Activated CD8-positive, alpha-beta T cell treated with anti-CD3 and anti-CD28 coated beads for 36 hours (primary cell): ENCODE measurements at regions of chr3 and their contacts with region 1.

Region 1: GRCh38 chr3:72665701-72666443 is 182.4 kb downstream of the SHQ1 start:
- DNase-seq: peak; percentile 77
- ATAC-seq: peak; percentile 68
- H3K4me3 Mint-ChIP-seq: no peak overlapping the region
- H3K27ac Mint-ChIP-seq: no peak overlapping the region
- H3K4me1 Mint-ChIP-seq: no peaks in the 10 kb centered on the region
- H3K27me3 Mint-ChIP-seq: no peaks in the 10 kb centered on the region
- CTCF ChIP-seq: peak; percentile 67

Region 2: DNA sequence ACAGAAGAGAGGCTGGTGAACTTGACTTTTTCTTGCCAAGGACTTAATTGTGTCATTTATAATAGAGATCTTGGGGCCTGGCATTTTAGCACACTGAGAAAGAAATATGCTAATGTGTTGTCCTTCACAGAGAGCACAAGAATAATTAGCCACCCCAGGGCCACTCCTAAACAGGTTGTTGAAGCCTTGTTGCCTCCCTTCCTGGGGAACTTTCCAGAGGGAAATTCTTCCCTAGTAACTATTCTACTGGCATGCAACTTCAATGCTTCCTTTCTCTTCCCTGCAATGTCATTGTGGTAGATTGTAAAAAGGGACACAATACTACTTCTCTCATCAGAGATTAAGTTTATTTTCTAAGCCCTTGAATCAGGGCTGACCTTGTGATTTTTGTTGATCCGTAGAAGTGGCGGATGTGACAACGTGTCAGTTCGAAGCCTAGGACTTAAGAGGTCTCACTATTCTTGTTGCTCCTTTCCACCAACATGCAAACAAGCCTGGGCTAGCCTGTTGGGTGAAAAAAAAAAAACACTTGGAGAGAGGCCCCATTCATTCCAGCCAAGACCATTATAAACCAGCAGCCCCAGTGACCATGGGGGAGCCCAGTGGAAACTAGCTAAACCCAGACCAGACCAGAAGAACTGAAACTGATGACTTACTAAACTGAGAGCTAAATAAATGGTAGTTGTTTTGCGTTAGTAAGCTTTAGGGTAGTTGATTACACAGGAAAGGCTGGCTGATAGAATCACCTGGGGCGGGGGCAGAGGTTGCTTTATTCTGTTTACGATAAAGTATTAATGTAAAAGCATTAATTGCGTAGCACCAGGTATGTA is 104.8 kb before region 1 on chr3:
- CTCF ChIA-PET with region 1: no interaction called
- POLR2A ChIA-PET with region 1: no interaction called
- intact Hi-C with region 1: no loop called
- DNase-seq: no peak
- ATAC-seq: no peak
- H3K4me3 Mint-ChIP-seq: no peak overlapping the region
- H3K27ac Mint-ChIP-seq: no peak overlapping the region
- H3K4me1 Mint-ChIP-seq: no peaks in the 10 kb centered on the region
- H3K27me3 Mint-ChIP-seq: peaks cover 1% of the 10 kb centered on the region
- CTCF ChIP-seq: no peak

Region 3: GRCh38 chr3:72652395-72652794 is 13.5 kb before region 1 on chr3:
- CTCF ChIA-PET with region 1: interaction called, 15 read pairs
- POLR2A ChIA-PET with region 1: no interaction called
- intact Hi-C with region 1: no loop called
- DNase-seq: no peak
- ATAC-seq: no peak
- H3K4me3 Mint-ChIP-seq: no peak overlapping the region
- H3K27ac Mint-ChIP-seq: no peak overlapping the region
- H3K4me1 Mint-ChIP-seq: peaks cover under 1% of the 10 kb centered on the region
- H3K27me3 Mint-ChIP-seq: peaks cover 9% of the 10 kb centered on the region
- CTCF ChIP-seq: no peak

Region 4: GRCh38 chr3:72682936-72683452 is 17.1 kb after region 1 on chr3:
- CTCF ChIA-PET with region 1: interaction called, 10 read pairs
- POLR2A ChIA-PET with region 1: no interaction called
- intact Hi-C with region 1: no loop called
- DNase-seq: no peak
- ATAC-seq: no peak
- H3K4me3 Mint-ChIP-seq: no peak overlapping the region
- H3K27ac Mint-ChIP-seq: no peak overlapping the region
- H3K4me1 Mint-ChIP-seq: peaks cover 11% of the 10 kb centered on the region
- H3K27me3 Mint-ChIP-seq: no peaks in the 10 kb centered on the region
- CTCF ChIP-seq: no peak

Region 5: GRCh38 chr3:72722930-72723726 is 57.3 kb after region 1 on chr3:
- CTCF ChIA-PET with region 1: interaction called, 15 read pairs
- POLR2A ChIA-PET with region 1: no interaction called
- intact Hi-C with region 1: no loop called
- DNase-seq: peak; percentile 49
- ATAC-seq: peak; percentile 97
- H3K4me3 Mint-ChIP-seq: peak overlapping the region; percentile 21
- H3K27ac Mint-ChIP-seq: peak overlapping the region; percentile 77
- H3K4me1 Mint-ChIP-seq: peaks cover 16% of the 10 kb centered on the region
- H3K27me3 Mint-ChIP-seq: no peaks in the 10 kb centered on the region
- CTCF ChIP-seq: no peak

Region 6: GRCh38 chr3:72782521-72782920 is 116.6 kb after region 1 on chr3:
- CTCF ChIA-PET with region 1: interaction called, 11 read pairs
- POLR2A ChIA-PET with region 1: no interaction called
- intact Hi-C with region 1: no loop called
- DNase-seq: no peak
- ATAC-seq: no peak
- H3K4me3 Mint-ChIP-seq: no peak overlapping the region
- H3K27ac Mint-ChIP-seq: no peak overlapping the region
- H3K4me1 Mint-ChIP-seq: peaks cover 2% of the 10 kb centered on the region
- H3K27me3 Mint-ChIP-seq: no peaks in the 10 kb centered on the region
- CTCF ChIP-seq: no peak

Region 7: DNA sequence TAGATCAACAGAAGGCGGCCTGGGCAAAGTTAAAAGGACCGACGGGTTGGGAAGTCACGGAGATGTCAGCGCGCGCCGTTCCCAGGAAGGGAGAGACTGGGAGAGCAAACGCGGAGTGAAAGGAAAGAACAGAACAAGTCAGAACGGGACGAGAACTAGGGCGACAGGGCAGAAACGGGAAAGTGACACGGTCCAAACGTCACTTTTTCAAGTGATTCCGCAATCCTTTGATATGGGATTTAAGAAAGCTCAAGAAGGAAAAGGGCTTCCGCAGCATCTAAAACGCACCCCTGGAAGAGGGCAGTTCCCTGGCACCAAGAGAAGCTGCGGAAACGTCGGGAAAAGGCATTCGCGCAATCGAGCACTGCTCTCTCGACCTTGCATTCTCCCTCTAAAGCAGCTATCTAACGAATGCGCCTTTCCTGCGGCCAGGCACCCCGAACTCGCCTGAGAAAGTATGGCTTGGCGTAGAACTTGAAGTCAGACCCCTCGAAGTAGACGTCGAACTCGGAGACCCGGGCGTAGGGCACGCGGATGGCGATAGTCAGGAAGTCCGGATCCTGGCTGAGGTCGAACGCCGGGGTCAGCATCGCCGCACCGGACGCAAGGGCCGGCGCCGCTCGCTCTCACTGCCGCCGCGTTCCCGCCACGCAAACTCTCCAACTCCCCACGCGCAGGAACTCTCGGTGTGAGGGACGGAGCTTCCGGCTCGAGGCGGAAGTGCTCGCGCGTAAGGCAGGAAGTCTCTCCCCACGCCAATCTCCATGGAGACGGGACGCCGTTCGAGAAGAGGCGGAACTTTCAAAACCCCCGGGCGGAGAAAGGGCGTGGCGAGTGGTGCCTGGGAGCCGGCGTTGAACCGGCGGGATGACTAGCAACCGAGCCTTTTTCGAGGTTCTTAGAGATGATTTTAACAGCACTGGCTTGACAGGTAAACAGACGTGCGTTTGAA is 182.2 kb after region 1 on chr3 and contains the start of gene SHQ1:
- CTCF ChIA-PET with region 1: interaction called, 11 read pairs
- POLR2A ChIA-PET with region 1: no interaction called
- intact Hi-C with region 1: no loop called
- DNase-seq: peak; percentile 98
- ATAC-seq: peak; percentile 90
- H3K4me3 Mint-ChIP-seq: peak within 1 kb of the TSS; percentile 89
- H3K27ac Mint-ChIP-seq: peak within 1 kb of the TSS; percentile 84
- H3K4me1 Mint-ChIP-seq: peaks cover 51% of the 10 kb centered on the region
- H3K27me3 Mint-ChIP-seq: no peaks in the 10 kb centered on the region
- CTCF ChIP-seq: no peak
- total RNA-seq, gene SHQ1: 29.8 to 31.4 TPM